ENCODE measurements at regions of chr10 and their contacts with region 1.

Region 1: GRCh38 chr10:132229834-132230556 is 43.2 kb downstream of the DPYSL4 start:
- DNase-seq: peak; percentile 74
- ATAC-seq: peak; percentile 66
- H3K4me3 ChIP-seq: peak overlapping the region; percentile 43
- H3K27ac ChIP-seq: peak overlapping the region; percentile 59
- H3K4me1 ChIP-seq: peaks cover 9% of the 10 kb centered on the region
- H3K27me3 ChIP-seq: no peaks in the 10 kb centered on the region
- CTCF ChIP-seq: no peak

Region 2: GRCh38 chr10:131997366-131998049 is 232.5 kb before region 1 on chr10:
- intact Hi-C with region 1: no loop called
- DNase-seq: peak; percentile 92
- ATAC-seq: peak; percentile 89
- H3K4me3 ChIP-seq: peak overlapping the region; percentile 2
- H3K27ac ChIP-seq: peak overlapping the region; percentile 93
- H3K4me1 ChIP-seq: peaks cover 33% of the 10 kb centered on the region
- H3K27me3 ChIP-seq: no peaks in the 10 kb centered on the region
- CTCF ChIP-seq: no peak

Region 3: DNA sequence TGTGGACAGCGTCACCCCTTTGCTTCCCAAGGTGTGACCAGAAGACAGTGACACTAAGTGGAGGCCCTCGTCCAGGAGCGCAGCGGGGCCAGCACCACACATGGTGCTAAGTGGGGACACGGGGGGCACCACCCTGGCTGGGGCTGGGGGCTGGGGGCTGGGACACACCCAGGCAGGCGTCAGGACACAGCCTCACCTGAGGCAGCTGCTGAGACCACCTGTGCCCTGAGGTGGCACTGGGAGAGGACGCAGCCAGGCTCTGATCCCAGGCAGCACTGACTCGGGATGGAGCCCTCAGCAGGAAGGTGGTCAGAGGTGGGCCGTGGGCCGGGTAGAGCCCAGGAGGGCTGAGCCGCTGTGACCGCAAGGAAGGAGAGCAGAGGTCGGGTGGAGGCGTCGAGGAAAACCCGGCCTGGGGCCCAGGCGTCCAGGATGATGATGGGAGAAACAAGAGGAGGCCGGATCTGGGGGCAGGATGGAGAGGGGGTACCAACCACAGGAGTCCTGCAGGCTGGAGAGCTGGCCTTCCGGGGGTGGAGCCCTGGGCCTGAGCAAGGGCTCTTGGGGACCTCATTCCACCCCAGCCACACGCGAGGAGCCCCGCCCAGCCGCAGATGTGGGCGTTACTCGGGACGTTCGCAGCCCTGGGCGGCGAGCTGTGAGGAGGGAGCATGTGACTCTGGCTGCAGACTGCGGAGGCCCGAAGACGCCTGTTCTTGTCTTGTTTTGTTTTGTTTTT is 124.5 kb after region 1 on chr10:
- intact Hi-C with region 1: loop called (anchors 5 kb)
- DNase-seq: peak; percentile 60
- ATAC-seq: no peak
- H3K4me3 ChIP-seq: no peak overlapping the region
- H3K27ac ChIP-seq: no peak overlapping the region
- H3K4me1 ChIP-seq: no peaks in the 10 kb centered on the region
- H3K27me3 ChIP-seq: no peaks in the 10 kb centered on the region
- CTCF ChIP-seq: no peak

Measured in upper lobe of right lung (tissue), 1 donor.